ENCODE measurements at regions of chr4 and their contacts with region 1.

Region 1: GRCh38 chr4:122842984-122843531 is 16.4 kb downstream of the FGF2 start:
- DNase-seq: no peak
- ATAC-seq: peak in 4 of 8 donors; percentile 16 to 63 (median 42)
- H3K4me3 ChIP-seq: no peak overlapping the region
- H3K27ac ChIP-seq: no peak overlapping the region
- H3K4me1 ChIP-seq: peaks cover 0 to 38% (median 8%) of the 10 kb centered on the region in 9 donors
- H3K27me3 ChIP-seq: no peaks in the 10 kb centered on the region
- CTCF ChIP-seq: no peak

Region 2: GRCh38 chr4:122537388-122538135 is 305.5 kb before region 1 on chr4:
- intact Hi-C with region 1: no loop called
- DNase-seq: no peak
- ATAC-seq: no peak
- H3K4me3 ChIP-seq: no peak overlapping the region
- H3K27ac ChIP-seq: no peak overlapping the region
- H3K4me1 ChIP-seq: peaks cover 0 to 10% (median 0%) of the 10 kb centered on the region in 9 donors
- H3K27me3 ChIP-seq: no peaks in the 10 kb centered on the region
- CTCF ChIP-seq: no peak

Region 3: DNA sequence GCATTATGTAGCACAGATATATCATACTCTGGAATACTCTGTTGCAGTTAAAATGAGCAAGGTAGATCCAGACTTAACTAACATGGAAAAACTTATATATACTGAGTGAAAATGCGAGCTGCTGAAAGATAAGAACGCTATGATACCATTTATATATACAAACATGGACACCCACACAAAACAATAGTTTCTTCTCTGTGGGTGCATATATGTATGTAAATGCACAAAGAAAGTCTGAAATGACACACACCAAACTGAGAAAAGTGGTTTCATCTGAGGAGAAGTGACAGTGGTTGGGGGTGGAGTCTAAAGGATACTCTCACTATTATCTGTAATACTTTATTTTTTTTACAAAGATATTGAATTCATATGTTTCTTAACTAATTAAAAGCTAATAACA is 28.6 kb before region 1 on chr4:
- intact Hi-C with region 1: loop called in 1 of 10 experiments (anchors 1 kb)
- DNase-seq: no peak
- ATAC-seq: no peak
- H3K4me3 ChIP-seq: no peak overlapping the region
- H3K27ac ChIP-seq: no peak overlapping the region
- H3K4me1 ChIP-seq: peaks cover 0 to 6% (median 0%) of the 10 kb centered on the region in 9 donors
- H3K27me3 ChIP-seq: no peaks in the 10 kb centered on the region
- CTCF ChIP-seq: no peak

Region 4: DNA sequence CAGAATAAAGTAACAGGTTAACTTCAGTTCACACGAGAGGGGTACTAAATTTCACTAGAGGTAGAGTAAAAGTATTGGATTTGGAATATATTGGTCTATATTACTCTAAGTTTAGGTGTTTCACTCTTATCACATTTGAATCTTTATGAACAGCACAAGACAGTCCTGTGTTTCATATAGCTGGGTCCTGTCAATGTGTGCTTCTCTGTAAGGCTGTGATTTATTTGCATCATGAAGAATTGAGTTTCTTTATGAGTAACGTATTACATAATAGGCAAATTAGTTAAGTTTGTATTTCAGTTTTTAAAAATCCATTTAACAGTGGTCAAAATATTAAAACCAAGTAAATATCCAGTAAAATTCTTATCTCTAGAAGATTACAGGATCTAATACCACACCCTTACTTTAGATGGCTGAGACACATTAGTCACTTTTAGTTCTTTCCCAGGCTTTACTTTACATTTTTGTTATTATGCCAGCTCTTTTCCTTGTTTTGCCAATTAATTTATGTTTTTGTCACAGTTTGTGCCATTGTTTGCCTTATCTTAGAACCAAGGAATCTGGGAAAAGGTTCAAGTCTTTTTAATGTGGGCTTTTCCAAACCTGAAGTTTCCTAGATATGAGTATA is 47.2 kb after region 1 on chr4:
- intact Hi-C with region 1: loop called in 1 of 10 experiments (anchors 5 kb)
- DNase-seq: no peak
- ATAC-seq: peak in 2 of 8 donors; percentile 24 to 31
- H3K4me3 ChIP-seq: no peak overlapping the region
- H3K27ac ChIP-seq: peak overlapping the region in 6 of 10 donors; percentile 13 to 54 (median 30)
- H3K4me1 ChIP-seq: peaks cover 0 to 13% (median 2%) of the 10 kb centered on the region in 9 donors
- H3K27me3 ChIP-seq: no peaks in the 10 kb centered on the region
- CTCF ChIP-seq: no peak